Activated CD4-positive, alpha-beta memory T cell treated with anti-CD3 and anti-CD28 coated beads, Interleukin-2, amount 10 ng/mL, durations not matched to agents 7 days and 5 days (primary cell): ENCODE measurements at regions of chr12 and their contacts with region 1.

Region 1: GRCh38 chr12:89019408-89020120 is 332.7 kb downstream of the DUSP6 start:
- DNase-seq: peak; percentile 85
- H3K4me3 Mint-ChIP-seq: no peak overlapping the region
- H3K27ac Mint-ChIP-seq: no peak overlapping the region
- H3K4me1 Mint-ChIP-seq: peaks cover 26% of the 10 kb centered on the region
- H3K27me3 Mint-ChIP-seq: peaks cover 4% of the 10 kb centered on the region

Region 2: DNA sequence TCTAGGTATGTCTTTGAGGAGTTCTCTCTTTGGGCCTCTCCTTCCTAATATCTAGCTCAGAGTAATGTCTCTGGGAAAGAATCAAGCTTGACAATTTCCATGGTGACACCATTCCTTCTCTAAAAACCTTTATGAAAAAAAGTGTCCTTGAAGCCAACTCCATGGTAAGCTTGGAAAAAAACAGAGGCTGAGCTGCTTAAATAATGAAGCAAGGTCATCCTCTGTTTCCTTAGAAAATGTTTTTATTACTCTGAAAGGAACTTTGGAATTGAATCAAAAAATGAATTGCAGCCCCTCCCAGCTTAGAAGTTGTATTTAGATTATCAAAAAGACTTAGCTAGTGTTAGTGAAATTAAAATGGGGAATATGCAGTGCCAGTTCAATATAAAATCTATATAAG is 273.2 kb before region 1 on chr12:
- CTCF ChIA-PET with region 1: no interaction called
- POLR2A ChIA-PET with region 1: no interaction called
- DNase-seq: no peak
- H3K4me3 Mint-ChIP-seq: no peak overlapping the region
- H3K27ac Mint-ChIP-seq: no peak overlapping the region
- H3K4me1 Mint-ChIP-seq: no peaks in the 10 kb centered on the region
- H3K27me3 Mint-ChIP-seq: no peaks in the 10 kb centered on the region

Region 3: DNA sequence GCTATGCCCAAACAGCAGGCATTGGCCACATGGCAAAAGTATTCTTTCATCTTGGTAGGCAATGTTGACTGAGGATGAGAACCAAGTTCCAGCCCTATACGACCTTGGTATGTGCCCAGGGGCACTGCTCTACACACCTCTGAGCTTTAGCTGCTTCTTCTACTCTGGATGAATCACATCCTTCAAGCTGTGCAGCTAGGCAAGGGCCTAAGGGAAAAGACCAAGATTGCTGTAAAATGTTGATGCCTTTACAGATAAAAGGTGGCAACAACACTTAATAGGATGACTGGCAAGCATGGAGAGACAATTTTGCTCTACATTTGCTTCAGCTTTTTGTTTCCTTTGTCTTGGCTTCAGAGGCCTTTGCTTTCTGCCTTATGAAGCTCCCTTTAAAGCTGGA is 256.0 kb before region 1 on chr12:
- CTCF ChIA-PET with region 1: no interaction called
- POLR2A ChIA-PET with region 1: no interaction called
- DNase-seq: no peak
- H3K4me3 Mint-ChIP-seq: no peak overlapping the region
- H3K27ac Mint-ChIP-seq: no peak overlapping the region
- H3K4me1 Mint-ChIP-seq: no peaks in the 10 kb centered on the region
- H3K27me3 Mint-ChIP-seq: no peaks in the 10 kb centered on the region

Region 4: GRCh38 chr12:88934163-88934747 is 85.3 kb before region 1 on chr12:
- CTCF ChIA-PET with region 1: no interaction called
- POLR2A ChIA-PET with region 1: no interaction called
- DNase-seq: no peak
- H3K4me3 Mint-ChIP-seq: no peak overlapping the region
- H3K27ac Mint-ChIP-seq: no peak overlapping the region
- H3K4me1 Mint-ChIP-seq: no peaks in the 10 kb centered on the region
- H3K27me3 Mint-ChIP-seq: peaks cover 5% of the 10 kb centered on the region

Region 5: GRCh38 chr12:88993651-88994050 is 25.9 kb before region 1 on chr12:
- CTCF ChIA-PET with region 1: no interaction called
- POLR2A ChIA-PET with region 1: no interaction called
- DNase-seq: no peak
- H3K4me3 Mint-ChIP-seq: no peak overlapping the region
- H3K27ac Mint-ChIP-seq: no peak overlapping the region
- H3K4me1 Mint-ChIP-seq: no peaks in the 10 kb centered on the region
- H3K27me3 Mint-ChIP-seq: peaks cover 29% of the 10 kb centered on the region

Region 6: DNA sequence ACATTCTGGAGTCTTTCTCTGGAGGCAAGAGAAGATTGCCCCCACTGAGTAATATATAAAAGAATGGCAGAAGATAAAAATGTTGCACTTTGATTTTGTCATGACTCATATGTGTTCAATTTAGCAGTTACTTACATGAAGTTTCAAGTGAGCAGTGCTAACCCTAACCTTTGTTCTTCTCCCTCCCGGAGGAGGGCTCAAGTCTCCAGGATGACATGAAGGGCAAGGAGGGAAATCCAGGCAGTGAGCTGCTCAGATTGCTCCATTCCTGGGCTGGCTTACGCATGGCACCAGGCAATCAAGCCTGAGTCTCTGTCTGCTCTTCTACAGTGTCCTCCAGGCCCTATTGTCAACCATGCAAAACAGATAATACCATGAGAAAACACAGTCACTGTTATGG is 10.4 kb after region 1 on chr12:
- CTCF ChIA-PET with region 1: interaction called, 10 read pairs
- POLR2A ChIA-PET with region 1: no interaction called
- DNase-seq: no peak
- H3K4me3 Mint-ChIP-seq: no peak overlapping the region
- H3K27ac Mint-ChIP-seq: no peak overlapping the region
- H3K4me1 Mint-ChIP-seq: peaks cover 25% of the 10 kb centered on the region
- H3K27me3 Mint-ChIP-seq: no peaks in the 10 kb centered on the region

Region 7: GRCh38 chr12:89040146-89040964 is 20.8 kb after region 1 on chr12:
- CTCF ChIA-PET with region 1: interaction called, 109 read pairs
- POLR2A ChIA-PET with region 1: interaction called, 19 read pairs
- DNase-seq: peak; percentile 90
- H3K4me3 Mint-ChIP-seq: peak overlapping the region; percentile 35
- H3K27ac Mint-ChIP-seq: peak overlapping the region; percentile 96
- H3K4me1 Mint-ChIP-seq: peaks cover 58% of the 10 kb centered on the region
- H3K27me3 Mint-ChIP-seq: no peaks in the 10 kb centered on the region

Region 8: GRCh38 chr12:89051065-89051677 is 31.6 kb after region 1 on chr12:
- CTCF ChIA-PET with region 1: interaction called, 13 read pairs
- POLR2A ChIA-PET with region 1: no interaction called
- DNase-seq: no peak
- H3K4me3 Mint-ChIP-seq: no peak overlapping the region
- H3K27ac Mint-ChIP-seq: no peak overlapping the region
- H3K4me1 Mint-ChIP-seq: peaks cover 25% of the 10 kb centered on the region
- H3K27me3 Mint-ChIP-seq: no peaks in the 10 kb centered on the region

Region 9: GRCh38 chr12:89461649-89462612 is 442.4 kb after region 1 on chr12:
- CTCF ChIA-PET with region 1: interaction called, 53 read pairs
- POLR2A ChIA-PET with region 1: interaction called, 8 read pairs
- DNase-seq: no peak
- H3K4me3 Mint-ChIP-seq: peak overlapping the region; percentile 65
- H3K27ac Mint-ChIP-seq: peak overlapping the region; percentile 59
- H3K4me1 Mint-ChIP-seq: peaks cover 62% of the 10 kb centered on the region
- H3K27me3 Mint-ChIP-seq: no peaks in the 10 kb centered on the region

Region 10: DNA sequence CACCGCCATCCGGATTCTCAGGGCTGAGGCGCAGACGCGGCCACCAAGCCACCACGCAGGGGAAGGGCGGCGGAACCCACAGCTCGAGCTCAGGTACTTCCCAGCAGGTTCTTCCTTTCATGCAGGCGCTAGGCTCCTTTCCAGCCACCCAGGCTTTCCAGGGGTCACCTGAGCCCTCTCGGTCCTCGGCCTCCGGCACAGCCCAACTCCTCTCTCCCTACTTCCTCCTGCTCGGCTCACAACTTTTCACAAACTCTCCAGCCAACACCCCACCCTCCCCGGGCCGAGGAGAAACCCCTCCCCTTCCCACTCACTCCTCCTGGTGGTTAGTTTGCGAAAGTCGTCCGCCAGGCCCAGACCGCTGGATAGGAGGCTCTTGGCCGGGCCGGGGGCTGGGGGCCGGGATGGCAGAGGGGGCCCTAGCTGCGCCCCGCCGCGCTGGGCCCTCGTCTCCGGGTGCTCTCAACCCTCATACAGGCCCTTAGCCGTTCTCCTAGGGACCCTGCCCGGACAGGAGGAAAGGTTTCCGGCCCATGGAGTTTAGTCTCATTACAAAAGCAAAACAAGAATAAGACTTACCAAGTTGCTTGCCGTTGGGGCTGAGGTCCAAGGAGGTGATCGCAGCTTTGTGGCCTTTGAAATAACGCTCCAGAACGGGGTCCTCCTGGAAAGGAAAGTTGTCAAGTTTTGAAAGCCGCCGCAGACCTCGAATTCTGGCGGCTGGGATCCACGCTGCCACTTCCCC is 505.1 kb after region 1 on chr12 and contains the start of gene GALNT4:
- CTCF ChIA-PET with region 1: interaction called, 145 read pairs
- POLR2A ChIA-PET with region 1: interaction called, 22 read pairs
- DNase-seq: peak; percentile 84
- H3K4me3 Mint-ChIP-seq: peak within 1 kb of the TSS; percentile 90
- H3K27ac Mint-ChIP-seq: peak within 1 kb of the TSS; percentile 94
- H3K4me1 Mint-ChIP-seq: peaks cover 69% of the 10 kb centered on the region
- H3K27me3 Mint-ChIP-seq: no peaks in the 10 kb centered on the region
- total RNA-seq, gene GALNT4: 21.5 to 23.3 TPM